ENCODE measurements at regions of chr13 and their contacts with region 1.

Region 1: GRCh38 chr13:46595136-46595886 is 42.3 kb downstream of the LRCH1 start:
- DNase-seq: no peak
- ATAC-seq: no peak
- H3K4me3 ChIP-seq: no peak overlapping the region
- H3K4me3 Mint-ChIP-seq: no peak overlapping the region
- H3K27ac ChIP-seq: no peak overlapping the region
- H3K27ac Mint-ChIP-seq: peak overlapping the region; percentile 66
- H3K4me1 ChIP-seq: peaks cover 42% of the 10 kb centered on the region
- H3K4me1 Mint-ChIP-seq: peaks cover 94% of the 10 kb centered on the region
- H3K27me3 ChIP-seq: no peaks in the 10 kb centered on the region
- H3K27me3 Mint-ChIP-seq: no peaks in the 10 kb centered on the region
- CTCF ChIP-seq: no peak

Region 2: DNA sequence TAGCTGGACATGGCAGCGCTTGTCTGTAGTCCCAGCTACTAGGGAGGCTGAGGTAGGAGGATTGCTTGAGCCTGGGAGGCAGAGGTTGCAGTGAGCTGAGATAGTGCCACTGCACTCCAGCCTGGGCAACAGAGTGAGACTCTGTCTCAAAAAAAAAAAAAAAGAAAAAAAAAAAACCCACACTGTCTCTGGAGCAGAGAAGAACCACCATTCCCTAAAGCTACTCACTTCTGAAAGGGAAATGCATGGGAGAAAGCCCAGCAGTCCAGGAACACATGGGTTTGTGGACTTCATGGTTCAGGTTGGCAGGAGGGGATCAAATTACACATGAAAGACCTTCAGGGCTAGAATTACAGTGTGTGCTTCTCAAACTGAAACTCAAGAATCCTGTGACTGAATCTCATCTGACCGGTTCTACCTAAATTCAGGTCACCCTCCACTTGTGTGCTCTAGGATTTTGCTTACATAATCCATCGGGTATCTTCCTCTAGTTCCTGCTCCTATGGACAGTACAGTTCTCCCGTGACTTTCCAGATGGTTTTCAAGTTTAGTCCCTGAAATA is 460.3 kb before region 1 on chr13:
- CTCF ChIA-PET with region 1: no interaction called
- POLR2A ChIA-PET with region 1: no interaction called
- intact Hi-C with region 1: no loop called
- DNase-seq: no peak
- ATAC-seq: no peak
- H3K4me3 ChIP-seq: no peak overlapping the region
- H3K4me3 Mint-ChIP-seq: no peak overlapping the region
- H3K27ac ChIP-seq: no peak overlapping the region
- H3K27ac Mint-ChIP-seq: peak overlapping the region; percentile 64
- H3K4me1 ChIP-seq: no peaks in the 10 kb centered on the region
- H3K4me1 Mint-ChIP-seq: peaks cover 22% of the 10 kb centered on the region
- H3K27me3 ChIP-seq: no peaks in the 10 kb centered on the region
- H3K27me3 Mint-ChIP-seq: no peaks in the 10 kb centered on the region
- CTCF ChIP-seq: no peak

Region 3: DNA sequence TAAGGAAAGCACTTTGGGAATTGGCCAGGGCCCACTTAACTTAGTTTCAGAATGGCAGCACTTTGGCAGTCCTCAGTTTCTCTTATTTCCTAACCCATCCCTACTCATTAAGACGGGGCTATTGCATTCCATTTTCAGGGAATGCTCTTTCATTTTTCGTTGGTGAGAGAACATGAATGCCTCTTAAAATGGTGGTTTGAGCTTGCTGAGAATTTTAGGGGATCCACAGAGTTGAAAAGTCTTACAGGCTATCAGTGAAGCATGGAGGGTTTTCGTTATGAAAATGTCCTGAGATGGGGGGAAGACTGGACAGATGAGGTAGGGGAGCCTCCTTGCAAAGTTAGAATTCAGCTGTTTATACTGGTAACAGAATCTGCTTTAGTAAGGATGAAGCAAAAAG is 29.0 kb after region 1 on chr13:
- CTCF ChIA-PET with region 1: no interaction called
- POLR2A ChIA-PET with region 1: no interaction called
- intact Hi-C with region 1: no loop called
- DNase-seq: no peak
- ATAC-seq: no peak
- H3K4me3 ChIP-seq: no peak overlapping the region
- H3K4me3 Mint-ChIP-seq: no peak overlapping the region
- H3K27ac ChIP-seq: no peak overlapping the region
- H3K27ac Mint-ChIP-seq: no peak overlapping the region
- H3K4me1 ChIP-seq: peaks cover 16% of the 10 kb centered on the region
- H3K4me1 Mint-ChIP-seq: peaks cover 81% of the 10 kb centered on the region
- H3K27me3 ChIP-seq: no peaks in the 10 kb centered on the region
- H3K27me3 Mint-ChIP-seq: no peaks in the 10 kb centered on the region
- CTCF ChIP-seq: no peak

Region 4: GRCh38 chr13:46655377-46656180 is 60.3 kb after region 1 on chr13:
- CTCF ChIA-PET with region 1: no interaction called
- POLR2A ChIA-PET with region 1: no interaction called
- intact Hi-C with region 1: loop called in 1 of 2 experiments (anchors 10 kb)
- DNase-seq: no peak
- ATAC-seq: no peak
- H3K4me3 ChIP-seq: no peak overlapping the region
- H3K4me3 Mint-ChIP-seq: peak overlapping the region; percentile 49
- H3K27ac ChIP-seq: no peak overlapping the region
- H3K27ac Mint-ChIP-seq: peak overlapping the region; percentile 83
- H3K4me1 ChIP-seq: peaks cover 4% of the 10 kb centered on the region
- H3K4me1 Mint-ChIP-seq: peaks cover 45% of the 10 kb centered on the region
- H3K27me3 ChIP-seq: no peaks in the 10 kb centered on the region
- H3K27me3 Mint-ChIP-seq: no peaks in the 10 kb centered on the region
- CTCF ChIP-seq: no peak

Measured in CD4-positive, alpha-beta T cell (primary cell).